A673 (cell line): ENCODE measurements at regions of chr11 and their contacts with region 1.

Region 1: GRCh38 chr11:32340181-32340580 is 95.2 kb downstream of the WT1 start:
- DNase-seq: no peak
- H3K4me3 ChIP-seq: no peak overlapping the region
- H3K27ac ChIP-seq: no peak overlapping the region
- H3K4me1 ChIP-seq: no peaks in the 10 kb centered on the region
- H3K27me3 ChIP-seq: no peaks in the 10 kb centered on the region
- CTCF ChIP-seq: no peak

Region 2: GRCh38 chr11:32374261-32374711 is 34.1 kb after region 1 on chr11:
- CTCF ChIA-PET with region 1: interaction called, 16 read pairs
- POLR2A ChIA-PET with region 1: no interaction called
- intact Hi-C with region 1: no loop called
- DNase-seq: peak; percentile 98
- H3K4me3 ChIP-seq: no peak overlapping the region
- H3K27ac ChIP-seq: no peak overlapping the region
- H3K4me1 ChIP-seq: no peaks in the 10 kb centered on the region
- H3K27me3 ChIP-seq: no peaks in the 10 kb centered on the region
- CTCF ChIP-seq: peak; percentile 100; the same call in 1 of the 2 replicates